PC-3 (cell line): ENCODE measurements at regions of chr22 and their contacts with region 1.

Region 1: GRCh38 chr22:30777587-30777986 is 82.9 kb downstream of the OSBP2 start:
- DNase-seq: no peak
- ATAC-seq: no peak
- H3K4me3 ChIP-seq: no peak overlapping the region
- H3K27ac ChIP-seq: no peak overlapping the region
- H3K4me1 ChIP-seq: peaks cover 34% of the 10 kb centered on the region
- H3K27me3 ChIP-seq: no peaks in the 10 kb centered on the region
- CTCF ChIP-seq: no peak

Region 2: DNA sequence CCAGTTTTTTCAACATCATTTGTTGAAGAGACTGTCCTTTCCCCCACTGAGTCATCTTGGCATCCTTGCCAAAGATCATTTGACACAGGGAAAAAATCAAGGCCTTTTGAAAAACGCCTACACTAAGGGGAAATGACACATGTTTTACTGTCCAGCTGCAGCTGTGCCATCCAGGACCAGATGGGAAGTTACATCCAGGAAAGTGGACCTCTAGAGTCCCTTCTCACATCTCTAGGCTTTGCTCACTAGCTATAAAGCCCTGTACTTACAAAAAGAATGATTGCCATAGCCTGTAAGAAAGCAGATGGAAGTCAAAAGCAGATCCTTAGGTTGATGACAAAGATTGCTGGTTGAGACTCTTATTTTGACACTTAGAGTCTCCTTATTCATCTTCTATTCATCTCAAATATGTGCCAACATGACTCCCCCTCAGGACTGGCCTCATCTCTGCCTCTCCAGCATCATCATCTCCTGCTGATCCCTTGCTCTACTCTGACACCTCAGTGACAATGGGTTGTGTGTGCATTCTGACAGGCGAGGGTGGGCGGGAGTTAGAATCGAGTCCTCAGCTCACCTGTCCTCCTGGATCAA is 60.2 kb before region 1 on chr22:
- CTCF ChIA-PET with region 1: no interaction called
- POLR2A ChIA-PET with region 1: no interaction called
- intact Hi-C with region 1: no loop called
- DNase-seq: peak; percentile 88
- ATAC-seq: peak; percentile 94
- H3K4me3 ChIP-seq: 0 out of 2 replicates have a peak overlapping the region, but pooled peaks have one; percentile 9
- H3K27ac ChIP-seq: peak overlapping the region; percentile 68
- H3K4me1 ChIP-seq: peaks cover 21% of the 10 kb centered on the region
- H3K27me3 ChIP-seq: no peaks in the 10 kb centered on the region
- CTCF ChIP-seq: no peak

Region 3: GRCh38 chr22:30792456-30792855 is 14.9 kb after region 1 on chr22:
- CTCF ChIA-PET with region 1: no interaction called
- POLR2A ChIA-PET with region 1: no interaction called
- intact Hi-C with region 1: loop called (anchors 1 kb)
- DNase-seq: no peak
- ATAC-seq: peak; percentile 42
- H3K4me3 ChIP-seq: no peak overlapping the region
- H3K27ac ChIP-seq: no peak overlapping the region
- H3K4me1 ChIP-seq: no peaks in the 10 kb centered on the region
- H3K27me3 ChIP-seq: no peaks in the 10 kb centered on the region
- CTCF ChIP-seq: no peak

Region 4: GRCh38 chr22:30802202-30803166 is 24.9 kb after region 1 on chr22:
- CTCF ChIA-PET with region 1: no interaction called
- POLR2A ChIA-PET with region 1: interaction called, 3 read pairs
- intact Hi-C with region 1: loop called (anchors 1 kb)
- DNase-seq: peak; percentile 91
- ATAC-seq: peak; percentile 80
- H3K4me3 ChIP-seq: peak overlapping the region; percentile 65
- H3K27ac ChIP-seq: peak overlapping the region; percentile 96
- H3K4me1 ChIP-seq: peaks cover 47% of the 10 kb centered on the region
- H3K27me3 ChIP-seq: no peaks in the 10 kb centered on the region
- CTCF ChIP-seq: no peak

Region 5: GRCh38 chr22:30830907-30831306 is 53.3 kb after region 1 on chr22:
- CTCF ChIA-PET with region 1: no interaction called
- POLR2A ChIA-PET with region 1: no interaction called
- intact Hi-C with region 1: loop called (anchors 5 kb)
- DNase-seq: peak; percentile 95
- ATAC-seq: peak; percentile 53
- H3K4me3 ChIP-seq: no peak overlapping the region; the same call in 1 of the 2 replicates
- H3K27ac ChIP-seq: peak overlapping the region; percentile 100
- H3K4me1 ChIP-seq: peaks cover 29% of the 10 kb centered on the region
- H3K27me3 ChIP-seq: no peaks in the 10 kb centered on the region
- CTCF ChIP-seq: no peak

Region 6: GRCh38 chr22:31211862-31212730 is 434.5 kb after region 1 on chr22 and contains the start of gene LIMK2:
- CTCF ChIA-PET with region 1: no interaction called
- POLR2A ChIA-PET with region 1: interaction called, 13 read pairs
- intact Hi-C with region 1: no loop called
- DNase-seq: peak; percentile 83
- ATAC-seq: peak; percentile 85
- H3K4me3 ChIP-seq: peak within 1 kb of the TSS; percentile 89
- H3K27ac ChIP-seq: no peak within 1 kb of the TSS
- H3K4me1 ChIP-seq: peaks cover 13% of the 10 kb centered on the region
- H3K27me3 ChIP-seq: no peaks in the 10 kb centered on the region
- CTCF ChIP-seq: peak; percentile 78
- total RNA-seq, gene LIMK2: 13.2 and 17.2 TPM in 2 replicates